ENCODE measurements at regions of chr6 and their contacts with region 1.

Region 1: DNA sequence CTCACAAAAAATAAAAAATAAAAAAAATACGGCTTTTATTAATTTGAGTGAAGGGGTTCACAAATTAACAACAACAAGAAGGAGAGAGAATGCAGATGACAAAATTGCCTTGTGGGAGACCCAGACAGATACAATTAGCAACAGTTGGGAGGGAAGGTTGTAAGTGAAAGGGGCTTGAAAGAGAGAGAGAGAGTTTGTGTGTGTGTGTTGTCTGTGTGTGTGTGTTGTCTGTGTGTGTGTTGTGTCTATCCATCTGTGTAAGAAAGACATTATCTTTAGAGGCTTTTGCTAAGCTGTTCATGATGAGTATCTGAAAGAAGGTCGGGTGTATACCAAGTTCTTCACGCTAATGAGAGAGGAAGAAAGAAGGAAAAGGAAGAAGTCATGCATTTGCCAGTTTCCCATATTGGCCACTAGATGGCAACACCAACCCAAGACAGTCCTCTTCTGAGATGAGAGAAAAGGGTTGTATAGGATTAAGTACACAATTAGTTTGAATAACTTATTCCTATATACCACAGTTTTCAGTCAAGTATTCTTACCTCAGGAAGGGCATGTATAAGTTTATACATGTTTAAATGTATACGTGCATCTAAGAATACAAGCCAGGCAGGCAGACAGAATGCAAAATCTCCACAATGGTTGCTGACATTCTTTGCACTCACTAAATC is 63.7 kb upstream of the CD2AP start:
- DNase-seq: peak in 30 of 35 experiments; percentile 2 to 78 (median 22)
- ATAC-seq: peak; percentile 74 to 81 (median 80)
- H3K4me3 ChIP-seq: peak overlapping the region; percentile 42 to 71
- H3K4me3 Mint-ChIP-seq: peak overlapping the region; percentile 77 to 85 (median 81)
- H3K27ac ChIP-seq: no peak overlapping the region
- H3K27ac Mint-ChIP-seq: peak overlapping the region; percentile 77 to 92
- H3K4me1 ChIP-seq: peaks cover 9 to 12% of the 10 kb centered on the region in 2 experiments
- H3K4me1 Mint-ChIP-seq: peaks cover 19 to 23% (median 22%) of the 10 kb centered on the region in 3 donors
- H3K27me3 ChIP-seq: no peaks in the 10 kb centered on the region
- H3K27me3 Mint-ChIP-seq: no peaks in the 10 kb centered on the region

Region 2: DNA sequence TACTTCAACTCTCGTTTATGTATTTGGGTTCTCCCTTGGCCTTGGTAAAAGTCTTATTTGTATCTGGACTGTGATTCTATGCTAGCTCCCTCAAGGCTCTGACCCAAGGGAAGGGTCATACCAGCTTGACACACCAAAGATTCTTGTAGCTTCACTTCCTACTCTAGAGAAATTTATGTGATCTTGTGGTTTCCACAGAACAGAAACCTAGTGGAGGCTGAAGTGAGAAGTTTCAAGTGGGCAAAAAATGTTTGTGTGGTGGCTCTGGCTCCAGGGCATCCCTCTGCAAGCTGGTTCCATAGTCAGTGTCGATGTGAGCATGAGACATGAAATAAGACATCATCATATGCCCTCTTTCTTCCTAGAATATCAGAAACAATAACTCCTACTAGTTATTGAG is 56.1 kb before region 1 on chr6:
- CTCF ChIA-PET with region 1: no interaction called
- POLR2A ChIA-PET with region 1: no interaction called
- DNase-seq: no peak
- ATAC-seq: no peak
- H3K4me3 ChIP-seq: no peak overlapping the region
- H3K4me3 Mint-ChIP-seq: no peak overlapping the region
- H3K27ac ChIP-seq: no peak overlapping the region
- H3K27ac Mint-ChIP-seq: no peak overlapping the region
- H3K4me1 ChIP-seq: no peaks in the 10 kb centered on the region
- H3K4me1 Mint-ChIP-seq: no peaks in the 10 kb centered on the region
- H3K27me3 ChIP-seq: peaks cover 0 to 2% of the 10 kb centered on the region in 2 experiments
- H3K27me3 Mint-ChIP-seq: peaks cover 7 to 18% of the 10 kb centered on the region in 2 donors

Region 3: GRCh38 chr6:47392251-47392650 is 21.6 kb before region 1 on chr6:
- CTCF ChIA-PET with region 1: no interaction called
- POLR2A ChIA-PET with region 1: no interaction called
- DNase-seq: no peak
- ATAC-seq: no peak
- H3K4me3 ChIP-seq: no peak overlapping the region
- H3K4me3 Mint-ChIP-seq: no peak overlapping the region
- H3K27ac ChIP-seq: no peak overlapping the region
- H3K27ac Mint-ChIP-seq: no peak overlapping the region
- H3K4me1 ChIP-seq: no peaks in the 10 kb centered on the region
- H3K4me1 Mint-ChIP-seq: no peaks in the 10 kb centered on the region
- H3K27me3 ChIP-seq: peaks cover 0 to 11% of the 10 kb centered on the region in 2 experiments
- H3K27me3 Mint-ChIP-seq: peaks cover 3 to 7% of the 10 kb centered on the region in 2 donors

Region 4: DNA sequence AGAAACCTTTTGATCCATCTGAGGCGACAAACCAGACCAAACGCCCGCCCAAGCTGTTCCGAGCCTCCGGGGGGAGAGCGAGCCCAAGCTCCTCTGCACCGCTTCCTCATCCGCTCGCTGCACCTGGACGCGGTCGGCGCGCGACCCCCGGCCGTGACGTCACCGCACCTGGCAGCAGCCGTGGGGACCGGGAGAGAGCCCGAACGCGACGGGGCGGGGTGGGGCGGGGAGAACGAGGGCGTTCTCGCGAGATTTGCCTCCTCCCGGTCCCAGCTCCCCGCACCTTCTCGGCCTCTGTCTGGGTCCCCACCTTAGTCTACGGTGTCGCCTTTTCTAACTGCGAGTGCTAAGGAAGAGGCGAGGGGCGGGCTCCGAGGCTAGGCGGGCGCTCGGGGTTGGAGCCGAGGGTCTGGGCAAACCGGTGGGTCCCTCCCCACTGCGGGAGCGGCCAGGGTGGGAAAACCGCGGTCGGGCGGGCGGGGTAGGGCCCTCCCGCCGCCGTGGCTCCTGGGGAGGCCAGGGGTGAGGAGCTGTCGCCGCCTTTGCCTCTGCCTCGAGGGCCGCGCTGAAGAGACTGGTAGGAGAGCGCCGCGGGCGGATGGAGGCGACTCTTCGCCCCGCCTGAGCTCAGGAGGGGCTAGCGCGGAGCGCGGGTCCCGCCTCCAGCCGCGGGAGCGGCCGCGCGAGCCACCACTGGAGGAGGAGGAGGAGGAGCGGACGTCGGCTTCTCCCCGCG is 63.8 kb after region 1 on chr6 and contains the start of gene CD2AP:
- CTCF ChIA-PET with region 1: interaction called, 3 to 15 read pairs
- POLR2A ChIA-PET with region 1: interaction called, 3 to 6 read pairs
- DNase-seq: peak; percentile 85 to 94 (median 90)
- ATAC-seq: peak; percentile 85 to 89 (median 86)
- H3K4me3 ChIP-seq: peak within 1 kb of the TSS; percentile 84 to 89
- H3K4me3 Mint-ChIP-seq: peak within 1 kb of the TSS; percentile 93 to 99 (median 99)
- H3K27ac ChIP-seq: peak within 1 kb of the TSS; percentile 92
- H3K27ac Mint-ChIP-seq: peak within 1 kb of the TSS; percentile 98 to 99
- H3K4me1 ChIP-seq: peaks cover 10 to 20% of the 10 kb centered on the region in 2 experiments
- H3K4me1 Mint-ChIP-seq: peaks cover 38 to 53% (median 40%) of the 10 kb centered on the region in 3 donors
- H3K27me3 ChIP-seq: no peaks in the 10 kb centered on the region
- H3K27me3 Mint-ChIP-seq: no peaks in the 10 kb centered on the region
- total RNA-seq, gene CD2AP: 22.3 to 39.7 (median 23.6) TPM

Region 5: DNA sequence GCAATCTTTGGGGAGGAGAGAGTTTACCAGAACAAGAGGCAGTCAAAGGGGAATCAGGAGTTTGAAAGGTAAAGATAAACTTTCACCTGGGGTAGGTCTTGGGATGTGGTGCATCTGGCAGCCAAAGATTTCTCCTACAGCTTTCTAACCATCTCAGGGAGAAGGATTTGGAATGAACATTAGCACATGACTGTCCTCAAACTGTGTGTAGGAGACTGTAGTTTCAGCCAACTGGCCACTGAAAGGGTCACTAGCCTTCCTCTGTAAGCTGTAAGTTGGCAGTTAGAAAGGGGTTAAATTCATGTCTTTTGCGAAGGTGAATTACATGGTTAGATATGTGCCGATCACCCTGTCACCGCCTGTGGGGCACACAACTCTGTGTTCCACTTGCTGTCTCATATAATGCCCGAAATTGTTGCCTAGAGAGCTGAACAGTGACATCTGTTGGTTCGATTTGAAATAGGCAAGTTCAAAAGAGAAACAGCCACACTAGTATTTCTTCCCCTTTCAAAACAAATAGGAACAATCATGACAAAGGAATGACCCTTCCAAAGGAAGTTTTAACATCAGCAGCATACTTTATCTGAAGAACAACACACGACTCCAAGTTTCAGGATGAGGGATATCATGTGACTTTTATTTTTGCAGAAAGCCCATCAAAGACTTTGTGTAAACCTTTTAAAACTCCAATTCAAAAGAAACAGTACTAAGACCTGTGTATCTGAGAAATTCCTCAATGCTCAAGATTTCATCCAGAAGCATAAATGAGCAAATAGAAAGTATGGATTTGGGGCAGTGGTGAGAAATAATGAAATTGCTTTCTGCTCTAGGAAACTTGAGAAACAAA is 366.8 kb after region 1 on chr6:
- CTCF ChIA-PET with region 1: interaction called, 9 to 16 read pairs
- POLR2A ChIA-PET with region 1: no interaction called
- DNase-seq: peak in 22 of 35 experiments; percentile 0 to 64 (median 8)
- ATAC-seq: peak; percentile 65 to 77 (median 74)
- H3K4me3 ChIP-seq: no peak overlapping the region
- H3K4me3 Mint-ChIP-seq: no peak overlapping the region
- H3K27ac ChIP-seq: no peak overlapping the region
- H3K27ac Mint-ChIP-seq: peak overlapping the region in 1 of 2 donors; percentile 9
- H3K4me1 ChIP-seq: peaks cover 2 to 3% of the 10 kb centered on the region in 2 experiments
- H3K4me1 Mint-ChIP-seq: peaks cover 8% of the 10 kb centered on the region in 3 donors
- H3K27me3 ChIP-seq: no peaks in the 10 kb centered on the region
- H3K27me3 Mint-ChIP-seq: peaks cover 1 to 6% of the 10 kb centered on the region in 2 donors

Measured in T-cell (primary cell).